T-cell (primary cell): ENCODE measurements at regions of chr21 and their contacts with region 1.

Region 1: GRCh38 chr21:37009740-37010341 is 3.3 kb downstream of the RIPPLY3 start:
- DNase-seq: peak; percentile 31 to 85 (median 69)
- ATAC-seq: peak; percentile 86 to 91 (median 90)
- H3K4me3 ChIP-seq: no peak overlapping the region
- H3K4me3 Mint-ChIP-seq: peak overlapping the region; percentile 41 to 65 (median 53)
- H3K27ac ChIP-seq: no peak overlapping the region
- H3K27ac Mint-ChIP-seq: no peak overlapping the region
- H3K4me1 ChIP-seq: peaks cover 2 to 27% of the 10 kb centered on the region in 2 experiments
- H3K4me1 Mint-ChIP-seq: peaks cover 12 to 18% (median 14%) of the 10 kb centered on the region in 3 donors
- H3K27me3 ChIP-seq: peaks cover 4 to 65% of the 10 kb centered on the region in 2 experiments
- H3K27me3 Mint-ChIP-seq: peaks cover 24 to 49% of the 10 kb centered on the region in 2 donors

Region 2: GRCh38 chr21:37208056-37208721 is 198.3 kb after region 1 on chr21:
- CTCF ChIA-PET with region 1: no interaction called
- POLR2A ChIA-PET with region 1: interaction called in 1 of 2 experiments, 11 read pairs
- DNase-seq: peak in 6 of 35 experiments; percentile 9 to 40 (median 13)
- ATAC-seq: peak in 2 of 4 experiments; percentile 35 to 46
- H3K4me3 ChIP-seq: no peak overlapping the region
- H3K4me3 Mint-ChIP-seq: peak overlapping the region in 1 of 3 donors; percentile 22
- H3K27ac ChIP-seq: no peak overlapping the region
- H3K27ac Mint-ChIP-seq: peak overlapping the region in 1 of 2 donors; percentile 18
- H3K4me1 ChIP-seq: peaks cover 0 to 12% of the 10 kb centered on the region in 2 experiments
- H3K4me1 Mint-ChIP-seq: peaks cover 13 to 23% (median 16%) of the 10 kb centered on the region in 3 donors
- H3K27me3 ChIP-seq: peaks cover 0 to 13% of the 10 kb centered on the region in 2 experiments
- H3K27me3 Mint-ChIP-seq: no peaks in the 10 kb centered on the region